ENCODE measurements at regions of chr7 and their contacts with region 1.

Region 1: DNA sequence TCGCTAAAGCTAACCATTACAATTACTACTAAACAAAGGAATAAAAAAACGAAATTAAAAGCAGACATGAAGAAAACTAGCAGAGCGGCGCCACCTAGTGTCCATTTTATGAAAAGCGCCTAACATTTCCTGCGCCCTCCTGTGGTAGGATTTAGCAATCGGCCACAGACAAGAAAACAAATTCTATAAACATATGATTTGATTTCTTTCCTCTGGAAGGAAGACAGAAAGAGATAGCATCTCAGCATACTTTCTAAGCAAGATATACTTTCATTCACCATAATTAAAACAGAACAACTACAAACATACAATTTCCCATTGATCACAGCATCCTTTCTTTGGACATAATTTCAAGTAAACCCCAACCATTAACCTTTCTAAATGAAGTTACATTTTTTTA is 337.7 kb upstream of the NPVF start:
- DNase-seq: peak; percentile 17 to 64
- ATAC-seq: peak in 3 of 4 donors; percentile 64 to 80 (median 70)
- H3K4me3 ChIP-seq: peak overlapping the region; percentile 22
- H3K27ac ChIP-seq: no peak overlapping the region
- H3K4me1 ChIP-seq: peaks cover 18% of the 10 kb centered on the region
- H3K27me3 ChIP-seq: no peaks in the 10 kb centered on the region
- CTCF ChIP-seq: peak; percentile 100

Region 2: GRCh38 chr7:25389489-25390106 is 176.4 kb before region 1 on chr7:
- intact Hi-C with region 1: loop called (anchors 1 to 5 kb)
- DNase-seq: no peak
- ATAC-seq: peak in 1 of 4 donors; percentile 35
- H3K4me3 ChIP-seq: no peak overlapping the region
- H3K27ac ChIP-seq: no peak overlapping the region
- H3K4me1 ChIP-seq: peaks cover 8% of the 10 kb centered on the region
- H3K27me3 ChIP-seq: no peaks in the 10 kb centered on the region
- CTCF ChIP-seq: peak; percentile 31

Region 3: GRCh38 chr7:25619963-25620799 is 54.2 kb after region 1 on chr7:
- intact Hi-C with region 1: no loop called
- DNase-seq: peak in 1 of 2 donors; percentile 18
- ATAC-seq: peak in 1 of 4 donors; percentile 24
- H3K4me3 ChIP-seq: no peak overlapping the region
- H3K27ac ChIP-seq: no peak overlapping the region
- H3K4me1 ChIP-seq: peaks cover 9% of the 10 kb centered on the region
- H3K27me3 ChIP-seq: no peaks in the 10 kb centered on the region
- CTCF ChIP-seq: no peak

Measured in psoas muscle (tissue), 8 donors.